Left colon (tissue), 2 donors: ENCODE measurements at regions of chr17 and their contacts with region 1.

Region 1: GRCh38 chr17:45135192-45135977 is at the start of gene ACBD4:
- DNase-seq: peak; percentile 94 to 96
- ATAC-seq: peak; percentile 69
- total RNA-seq, gene ACBD4: 22.3 to 22.6 TPM

Region 2: DNA sequence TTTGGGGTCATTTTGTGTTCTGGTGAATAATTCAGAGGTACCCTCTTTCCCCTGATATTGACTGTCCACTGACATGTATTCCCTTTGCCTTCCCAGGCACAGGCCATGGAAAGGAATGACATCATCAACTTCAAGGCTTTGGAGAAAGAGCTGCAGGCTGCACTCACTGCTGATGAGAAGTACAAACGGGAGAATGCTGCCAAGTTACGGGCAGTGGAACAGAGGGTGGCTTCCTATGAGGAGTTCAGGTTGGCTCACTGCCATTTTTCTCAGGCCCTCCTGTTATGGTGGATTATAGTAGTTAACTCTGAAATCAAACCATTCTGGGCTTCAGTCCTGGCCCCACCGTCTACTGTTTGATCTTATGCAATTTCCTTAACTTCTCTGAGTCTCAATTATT is 234.5 kb before region 1 on chr17:
- intact Hi-C with region 1: no loop called
- DNase-seq: no peak
- ATAC-seq: no peak

Region 3: GRCh38 chr17:45073414-45074070 is 61.8 kb before region 1 on chr17:
- intact Hi-C with region 1: no loop called
- DNase-seq: no peak
- ATAC-seq: no peak

Region 4: DNA sequence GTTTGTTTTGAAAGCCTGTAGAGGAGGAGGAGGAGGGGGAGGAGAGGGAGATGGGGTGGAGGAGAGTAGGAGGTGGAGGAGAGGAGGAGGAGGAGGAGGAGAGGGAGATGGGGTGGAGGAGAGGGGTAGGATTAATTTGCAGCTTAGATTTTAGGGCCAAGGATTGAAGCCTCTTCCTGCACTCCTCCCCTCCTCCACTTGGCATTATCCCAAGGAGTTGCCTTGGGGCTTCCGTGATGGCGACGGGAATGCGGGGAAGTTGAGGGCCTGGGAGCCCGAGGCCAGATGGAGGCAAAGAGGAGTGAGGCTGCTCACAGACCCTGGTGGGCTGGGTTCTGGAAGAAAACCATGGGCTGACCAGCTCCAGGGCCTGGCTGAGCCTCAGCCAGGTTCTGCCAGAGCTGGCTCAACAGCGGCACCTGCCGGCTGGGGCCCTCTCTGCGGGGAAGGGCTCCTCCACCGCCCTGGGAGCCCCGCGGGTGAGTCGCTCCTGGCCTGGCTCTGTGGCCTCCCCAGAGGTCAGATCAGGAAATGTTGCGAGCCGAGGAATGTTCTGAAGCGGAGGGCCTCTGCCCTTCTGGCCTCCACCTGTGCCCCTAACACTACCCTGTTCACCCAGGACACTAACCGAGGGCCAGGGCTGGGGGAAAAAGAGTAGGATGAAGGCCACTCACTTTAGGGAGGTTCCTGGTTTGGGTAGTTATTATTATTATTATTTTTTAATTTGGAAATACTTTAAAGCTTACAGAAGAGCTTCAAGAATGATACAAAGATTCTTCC is 62.4 kb after region 1 on chr17:
- intact Hi-C with region 1: loop called (anchors 5 to 10 kb)
- DNase-seq: peak; percentile 86 to 93
- ATAC-seq: peak; percentile 99